ENCODE measurements at regions of chr4 and their contacts with region 1.

Region 1: GRCh38 chr4:68011684-68012083 is 48.4 kb upstream of the TMPRSS11A start:
- DNase-seq: no peak
- H3K4me3 ChIP-seq: no peak overlapping the region
- CTCF ChIP-seq: no peak
- POLR2A ChIP-seq: no peak

Region 2: GRCh38 chr4:67909905-67910584 is 101.6 kb before region 1 on chr4:
- intact Hi-C with region 1: no loop called
- DNase-seq: no peak
- H3K4me3 ChIP-seq: no peak overlapping the region
- CTCF ChIP-seq: no peak
- POLR2A ChIP-seq: no peak

Region 3: GRCh38 chr4:69044247-69044646 is 1032.6 kb after region 1 on chr4:
- intact Hi-C with region 1: loop called (anchors 5 kb)
- DNase-seq: no peak
- H3K4me3 ChIP-seq: no peak overlapping the region
- CTCF ChIP-seq: no peak
- POLR2A ChIP-seq: no peak

Measured in lower leg skin (tissue), 4 donors.